Calu3 (cell line): ENCODE measurements at regions of chr18 and their contacts with region 1.

Region 1: GRCh38 chr18:79458131-79458838 is 62.6 kb downstream of the NFATC1 start:
- DNase-seq: peak; percentile 69
- H3K4me3 Mint-ChIP-seq: peak overlapping the region; percentile 44
- H3K27ac Mint-ChIP-seq: peak overlapping the region; percentile 58
- H3K4me1 Mint-ChIP-seq: peaks cover 6% of the 10 kb centered on the region
- H3K27me3 Mint-ChIP-seq: no peaks in the 10 kb centered on the region
- CTCF ChIP-seq: no peak

Region 2: GRCh38 chr18:79402977-79403722 is 55.1 kb before region 1 on chr18:
- CTCF ChIA-PET with region 1: no interaction called
- intact Hi-C with region 1: loop called (anchors 1 kb)
- DNase-seq: no peak
- H3K4me3 Mint-ChIP-seq: no peak overlapping the region
- H3K27ac Mint-ChIP-seq: no peak overlapping the region
- H3K4me1 Mint-ChIP-seq: no peaks in the 10 kb centered on the region
- H3K27me3 Mint-ChIP-seq: no peaks in the 10 kb centered on the region
- CTCF ChIP-seq: no peak